ENCODE measurements at regions of chr12 and their contacts with region 1.

Region 1: DNA sequence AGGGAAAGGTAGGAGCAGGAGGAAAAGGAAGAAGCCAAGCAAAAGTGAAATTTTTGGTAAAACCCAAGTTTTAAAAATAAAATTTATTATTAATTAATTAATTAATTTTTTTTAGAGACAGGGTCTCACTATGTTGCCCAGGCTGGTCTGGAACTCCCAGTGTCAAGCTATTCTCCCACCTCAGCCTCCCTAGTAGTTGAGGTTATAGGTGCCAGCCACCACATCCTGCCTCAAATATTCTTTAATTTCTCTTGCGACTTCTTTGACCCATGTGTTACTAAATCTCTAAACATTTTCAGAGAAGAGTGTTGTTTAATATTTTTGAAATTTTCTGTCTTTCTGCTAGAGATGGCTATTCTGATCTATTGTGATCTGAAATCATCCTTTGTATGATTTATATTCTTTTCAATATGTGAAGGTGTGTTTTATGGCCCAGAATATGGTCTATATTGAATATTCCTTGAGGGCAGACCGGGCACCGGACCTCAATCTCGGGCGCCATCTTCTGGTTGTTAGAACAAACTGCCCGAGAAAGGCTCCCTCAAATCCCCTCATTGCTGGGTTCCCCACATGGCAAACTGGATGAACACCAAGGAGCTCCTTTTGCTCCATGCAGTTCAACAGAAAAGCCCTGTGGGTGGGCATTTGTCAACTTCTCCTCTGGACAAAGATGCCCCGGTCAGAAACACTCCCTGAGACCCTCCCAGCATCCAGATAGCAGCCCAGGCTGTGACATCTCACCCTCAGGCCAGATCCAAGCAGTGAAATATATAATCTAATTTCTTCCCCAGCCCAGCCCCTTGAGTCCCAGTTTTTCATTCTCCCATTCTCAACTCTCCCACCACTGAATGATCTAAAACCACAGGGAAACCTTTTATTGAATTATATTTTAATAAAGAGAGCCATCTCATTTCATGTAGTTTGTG is 110.5 kb downstream of the ASCL4 start:
- H3K4me3 Mint-ChIP-seq: no peak overlapping the region
- H3K27ac Mint-ChIP-seq: no peak overlapping the region
- H3K4me1 Mint-ChIP-seq: peaks cover 17% of the 10 kb centered on the region
- H3K27me3 Mint-ChIP-seq: peaks cover 9% of the 10 kb centered on the region

Region 2: GRCh38 chr12:107670999-107671643 is 213.9 kb before region 1 on chr12:
- intact Hi-C with region 1: loop called (anchors 1 kb)
- H3K4me3 Mint-ChIP-seq: no peak overlapping the region
- H3K27ac Mint-ChIP-seq: no peak overlapping the region
- H3K4me1 Mint-ChIP-seq: peaks cover 8% of the 10 kb centered on the region
- H3K27me3 Mint-ChIP-seq: peaks cover 6% of the 10 kb centered on the region

Region 3: GRCh38 chr12:107702106-107702505 is 182.9 kb before region 1 on chr12:
- intact Hi-C with region 1: loop called (anchors 5 kb)
- H3K4me3 Mint-ChIP-seq: no peak overlapping the region
- H3K27ac Mint-ChIP-seq: no peak overlapping the region
- H3K4me1 Mint-ChIP-seq: no peaks in the 10 kb centered on the region
- H3K27me3 Mint-ChIP-seq: no peaks in the 10 kb centered on the region